Activated CD4-positive, alpha-beta T cell treated with anti-CD3 and anti-CD28 coated beads, Interleukin-2, amount 10 ng/mL, durations not matched to agents 7 days and 5 days (primary cell): ENCODE measurements at regions of chr20 and their contacts with region 1.

Region 1: GRCh38 chr20:37956084-37956483 is 53.2 kb downstream of the VSTM2L start:
- DNase-seq: no peak
- H3K4me3 Mint-ChIP-seq: no peak overlapping the region
- H3K27ac Mint-ChIP-seq: no peak overlapping the region
- H3K4me1 Mint-ChIP-seq: no peaks in the 10 kb centered on the region
- H3K27me3 Mint-ChIP-seq: peaks cover 13% of the 10 kb centered on the region

Region 2: GRCh38 chr20:37845241-37845711 is 110.8 kb before region 1 on chr20:
- CTCF ChIA-PET with region 1: no interaction called
- POLR2A ChIA-PET with region 1: no interaction called
- DNase-seq: no peak
- H3K4me3 Mint-ChIP-seq: no peak overlapping the region
- H3K27ac Mint-ChIP-seq: no peak overlapping the region
- H3K4me1 Mint-ChIP-seq: no peaks in the 10 kb centered on the region
- H3K27me3 Mint-ChIP-seq: no peaks in the 10 kb centered on the region

Region 3: DNA sequence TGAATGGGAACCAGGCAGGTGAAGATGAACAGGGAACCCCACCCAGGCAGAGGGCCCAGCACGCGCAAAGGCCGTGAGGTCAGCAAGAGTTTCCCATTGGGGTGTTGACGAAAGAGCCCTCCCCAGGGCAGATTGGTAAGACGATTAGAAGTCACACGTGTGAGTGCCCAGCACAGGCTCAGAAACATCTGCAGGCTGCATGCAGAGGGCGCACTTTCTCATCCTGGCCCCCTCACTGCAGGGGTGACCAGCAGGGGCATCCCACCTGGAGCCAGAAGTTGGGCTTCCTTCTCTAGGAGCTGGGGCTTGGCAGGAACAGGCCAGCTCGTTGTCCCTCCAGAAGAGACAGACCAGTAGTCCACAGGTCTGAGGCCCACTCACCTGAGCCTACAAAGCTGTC is 14.8 kb before region 1 on chr20:
- CTCF ChIA-PET with region 1: no interaction called
- POLR2A ChIA-PET with region 1: no interaction called
- DNase-seq: no peak
- H3K4me3 Mint-ChIP-seq: no peak overlapping the region
- H3K27ac Mint-ChIP-seq: no peak overlapping the region
- H3K4me1 Mint-ChIP-seq: no peaks in the 10 kb centered on the region
- H3K27me3 Mint-ChIP-seq: no peaks in the 10 kb centered on the region

Region 4: DNA sequence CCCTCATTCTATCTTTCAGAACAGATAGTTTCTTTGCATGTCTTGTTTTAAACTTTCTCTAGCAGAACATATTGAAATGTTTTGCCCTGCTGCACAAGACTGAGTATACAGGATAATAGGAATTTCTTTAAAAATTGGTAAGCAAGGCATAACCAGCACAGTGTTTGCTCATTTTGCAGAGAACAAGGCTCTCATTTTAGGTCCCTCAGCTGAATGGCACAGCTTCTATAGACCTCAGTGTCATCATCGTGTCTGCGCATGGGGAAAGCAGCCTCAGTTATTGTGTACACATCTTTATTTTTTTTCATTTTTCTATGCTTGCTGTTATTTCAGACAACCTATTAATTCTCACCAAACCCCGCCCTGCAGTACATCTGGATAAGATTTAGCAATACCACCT is 41.4 kb after region 1 on chr20:
- CTCF ChIA-PET with region 1: no interaction called
- POLR2A ChIA-PET with region 1: interaction called, 13 read pairs
- DNase-seq: no peak
- H3K4me3 Mint-ChIP-seq: no peak overlapping the region
- H3K27ac Mint-ChIP-seq: no peak overlapping the region
- H3K4me1 Mint-ChIP-seq: peaks cover 11% of the 10 kb centered on the region
- H3K27me3 Mint-ChIP-seq: no peaks in the 10 kb centered on the region